Motor neuron (in vitro differentiated cells): ENCODE measurements at regions of chr3 and their contacts with region 1.

Region 1: GRCh38 chr3:58628823-58629562 is 37.6 kb downstream of the FAM3D start:
- ATAC-seq: peak in 3 of 8 experiments; percentile 28 to 57 (median 35)
- H3K4me3 ChIP-seq: no peak overlapping the region
- H3K27ac ChIP-seq: no peak overlapping the region
- H3K4me1 ChIP-seq: peaks cover 4 to 14% of the 10 kb centered on the region in 2 donors

Region 2: DNA sequence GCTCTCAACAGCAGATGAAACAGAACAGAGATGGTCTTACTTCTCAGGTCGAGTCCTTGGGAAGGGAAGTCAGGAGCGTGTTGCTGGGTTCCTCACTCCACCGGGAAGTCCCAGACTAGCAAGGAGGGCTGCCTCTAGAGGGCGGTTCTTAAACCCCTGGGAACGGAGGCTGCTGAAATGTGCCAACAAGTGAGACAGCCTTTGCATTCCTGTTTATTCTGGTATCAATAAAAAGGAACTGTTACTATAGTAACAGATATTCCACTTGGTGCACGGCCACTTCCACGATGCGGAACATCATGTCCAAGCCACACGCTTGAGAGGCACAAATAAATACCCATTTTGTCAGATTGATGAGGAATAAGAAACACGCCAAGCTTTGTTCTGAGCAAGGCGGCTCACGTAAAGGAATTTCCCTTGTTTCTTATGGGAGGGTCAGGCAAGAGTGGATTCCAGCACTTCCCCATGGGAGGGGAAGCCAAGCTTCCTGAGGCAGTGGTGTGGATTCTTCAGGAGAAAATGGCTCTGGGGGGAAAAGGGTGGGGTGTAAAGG is 51.6 kb before region 1 on chr3 and contains the start of gene FAM107A:
- in situ Hi-C with region 1: loop called in 1 of 9 experiments (anchors 10 kb)
- ATAC-seq: peak; percentile 27 to 77 (median 47)
- H3K4me3 ChIP-seq: no peak within 1 kb of the TSS
- H3K27ac ChIP-seq: peak within 1 kb of the TSS in 1 of 2 donors; percentile 25
- H3K4me1 ChIP-seq: peaks cover 33 to 44% of the 10 kb centered on the region in 2 donors
- total RNA-seq, gene FAM107A: 0.27 to 7.3 (median 1.3) TPM

Region 3: GRCh38 chr3:58776231-58776630 is 147.2 kb after region 1 on chr3:
- in situ Hi-C with region 1: no loop called
- ATAC-seq: no peak
- H3K4me3 ChIP-seq: no peak overlapping the region
- H3K27ac ChIP-seq: no peak overlapping the region
- H3K4me1 ChIP-seq: no peaks in the 10 kb centered on the region